Dorsolateral prefrontal cortex (tissue), 120 donors: ENCODE measurements at regions of chr2 and their contacts with region 1.

Region 1: DNA sequence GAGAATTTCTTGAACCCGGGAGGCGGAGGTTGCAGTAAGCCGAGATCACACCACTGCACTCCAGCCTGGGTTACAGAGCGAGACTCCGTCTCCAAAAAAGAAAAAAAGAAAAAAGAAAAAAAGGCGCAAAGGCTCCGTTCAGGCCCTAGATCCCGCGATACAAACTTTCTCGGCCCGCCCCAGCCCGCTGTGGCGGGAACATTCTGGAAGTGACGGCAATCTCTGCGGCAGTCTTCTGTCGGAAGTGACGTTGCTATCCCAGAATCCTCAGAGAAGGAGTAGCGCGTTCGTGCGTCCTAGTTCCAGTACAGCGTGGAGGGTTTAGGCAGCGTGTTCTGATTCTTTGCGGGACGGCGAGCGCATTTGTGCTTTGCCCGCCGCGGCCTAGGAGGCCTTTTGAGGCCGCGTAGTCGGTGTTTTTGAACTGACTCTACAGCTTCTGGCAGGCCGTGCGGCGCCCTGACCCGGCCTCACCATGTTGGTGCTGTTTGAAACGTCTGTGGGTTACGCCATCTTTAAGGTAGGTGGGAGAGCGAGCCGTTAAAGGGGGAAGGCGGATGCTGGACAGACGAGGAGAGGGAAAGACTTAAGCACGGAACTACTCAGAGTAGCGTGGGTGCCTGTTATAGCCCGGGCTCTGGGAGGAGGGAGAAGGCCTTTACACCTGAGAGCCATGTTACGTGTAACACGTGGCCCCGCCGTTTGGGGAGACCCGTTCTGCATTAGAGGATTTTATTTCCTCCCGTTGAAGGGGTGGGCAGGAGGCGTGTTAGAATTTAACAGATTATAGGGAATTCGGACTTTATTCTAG is at the start of gene NOP58:
- DNase-seq: peak; percentile 76 to 94 (median 93)
- H3K4me3 ChIP-seq: peak within 1 kb of the TSS; percentile 67 to 100 (median 93)
- H3K27ac ChIP-seq: peak within 1 kb of the TSS; percentile 86 to 100 (median 98)
- H3K27me3 ChIP-seq: no peaks in the 10 kb centered on the region
- CTCF ChIP-seq: peak in 23 of 56 donors; percentile 4 to 47 (median 20)
- total RNA-seq, gene NOP58: 25.6 to 69.7 (median 45.3) TPM

Region 2: DNA sequence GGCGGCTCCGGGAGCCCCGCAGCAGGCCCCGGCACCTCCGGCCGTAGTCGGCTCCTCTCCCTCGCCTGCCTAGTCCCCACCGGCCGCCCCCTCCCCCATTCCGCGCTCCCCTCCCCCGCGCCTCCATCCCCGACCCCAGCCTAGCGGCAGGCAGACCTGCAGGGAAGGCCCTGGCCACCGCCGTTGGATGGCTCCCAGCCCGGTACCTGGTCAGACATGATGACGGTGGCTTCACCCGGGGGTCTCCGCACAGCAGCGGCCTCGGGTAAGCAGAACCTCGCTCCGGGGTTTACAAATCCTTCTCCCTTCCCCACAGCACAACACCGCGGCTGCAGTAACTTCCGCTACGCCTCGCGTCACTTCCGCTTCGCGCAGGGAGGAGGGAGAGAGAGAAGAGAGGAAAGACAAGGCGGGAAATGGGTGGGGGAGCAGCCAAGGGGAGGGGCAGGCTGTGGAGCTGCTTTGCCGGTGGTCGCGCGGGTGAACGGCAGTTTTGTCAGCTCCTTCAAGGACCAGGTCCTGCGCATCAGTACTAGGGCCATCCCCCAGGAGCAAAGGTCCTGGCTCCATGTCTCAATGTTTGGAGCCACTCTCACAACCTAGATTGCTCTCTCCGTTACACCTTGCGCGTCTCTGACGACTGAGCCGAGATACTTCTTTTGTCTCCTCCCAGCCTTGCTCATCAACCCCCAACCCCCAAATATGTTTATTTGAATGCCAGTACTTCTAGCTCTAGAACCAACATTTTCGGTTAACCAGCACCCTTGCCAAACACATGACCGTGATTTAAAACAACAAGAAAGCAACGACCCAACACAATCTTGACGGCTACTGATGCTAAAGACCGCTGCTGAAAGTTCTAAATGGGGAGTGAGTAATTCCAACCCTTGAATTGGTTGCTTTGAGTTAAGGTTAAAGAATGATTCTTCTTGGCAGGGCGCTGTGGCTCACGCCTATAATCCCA is 27.2 kb before region 1 on chr2 and contains the start of gene SUMO1:
- intact Hi-C with region 1: loop called in 1 of 2 experiments (anchors 2 kb)
- DNase-seq: peak; percentile 83 to 96 (median 94)
- H3K4me3 ChIP-seq: peak within 1 kb of the TSS; percentile 72 to 99 (median 95)
- H3K27ac ChIP-seq: peak within 1 kb of the TSS; percentile 4 to 97 (median 89)
- H3K27me3 ChIP-seq: no peaks in the 10 kb centered on the region
- CTCF ChIP-seq: peak in 9 of 56 donors; percentile 3 to 32 (median 15)
- total RNA-seq, gene SUMO1: 58.1 to 144 (median 102) TPM